ENCODE measurements at regions of chr3 and their contacts with region 1.

Region 1: DNA sequence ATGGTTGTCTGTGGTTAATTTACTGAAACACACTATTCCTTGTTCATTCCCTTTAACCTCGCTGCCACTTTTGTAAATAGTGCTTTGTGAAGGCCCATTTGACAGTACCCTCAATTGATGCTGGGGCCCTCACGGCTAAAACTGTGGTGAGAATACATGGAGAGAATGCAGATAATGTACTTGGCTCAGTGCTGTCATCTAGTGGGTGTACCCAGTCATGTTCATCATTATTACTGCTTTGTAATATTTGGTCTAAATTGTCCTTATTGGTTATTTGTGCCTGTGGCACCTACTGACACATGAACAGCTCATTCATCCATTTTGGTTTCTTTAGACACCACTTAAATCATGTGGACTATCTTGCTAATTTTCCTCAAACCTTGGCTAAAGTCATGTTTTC is 543.6 kb downstream of the EDEM1 start:
- DNase-seq: no peak
- H3K4me3 Mint-ChIP-seq: no peak overlapping the region
- H3K27ac Mint-ChIP-seq: no peak overlapping the region
- H3K4me1 Mint-ChIP-seq: no peaks in the 10 kb centered on the region
- H3K27me3 Mint-ChIP-seq: no peaks in the 10 kb centered on the region

Region 2: GRCh38 chr3:5426094-5426883 is 304.8 kb before region 1 on chr3:
- intact Hi-C with region 1: loop called (anchors 10 kb)
- DNase-seq: peak; percentile 18
- H3K4me3 Mint-ChIP-seq: no peak overlapping the region
- H3K27ac Mint-ChIP-seq: no peak overlapping the region
- H3K4me1 Mint-ChIP-seq: no peaks in the 10 kb centered on the region
- H3K27me3 Mint-ChIP-seq: peaks cover 1% of the 10 kb centered on the region